Activated B cell treated with CpG ODN at 0.5 μM for 24 hours (primary cell): ENCODE measurements at regions of chr10 and their contacts with region 1.

Region 1: DNA sequence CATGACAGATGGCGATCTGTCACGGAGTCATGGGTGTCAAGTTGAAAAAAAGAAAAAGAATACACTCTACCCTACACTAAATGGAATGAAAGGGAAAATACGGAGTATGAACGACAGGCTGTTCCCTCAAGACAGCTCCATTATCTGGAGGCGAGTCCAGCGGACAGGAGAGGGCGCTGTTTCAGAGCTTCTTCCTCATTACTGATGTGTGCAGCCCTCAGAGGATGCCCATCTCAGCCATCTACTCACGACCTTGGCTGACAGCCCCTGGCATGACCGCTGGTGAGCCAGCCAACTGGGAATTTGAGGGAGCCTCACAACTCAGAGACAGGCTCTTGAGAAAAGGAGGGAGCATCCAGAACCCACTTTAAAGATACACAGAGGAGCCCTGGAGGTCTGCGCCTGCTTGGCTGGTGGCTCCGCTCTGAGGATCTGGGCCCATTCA is 49.6 kb upstream of the SMNDC1 start:
- DNase-seq: peak; percentile 60
- ATAC-seq: peak; percentile 5
- H3K4me3 Mint-ChIP-seq: peak overlapping the region; percentile 33
- H3K27ac Mint-ChIP-seq: peak overlapping the region; percentile 99
- H3K4me1 Mint-ChIP-seq: peaks cover 72% of the 10 kb centered on the region
- H3K27me3 Mint-ChIP-seq: no peaks in the 10 kb centered on the region
- CTCF ChIP-seq: no peak

Region 2: GRCh38 chr10:110304780-110305421 is 49.4 kb before region 1 on chr10 and contains the start of gene SMNDC1:
- CTCF ChIA-PET with region 1: interaction called, 29 read pairs
- POLR2A ChIA-PET with region 1: interaction called, 43 read pairs
- intact Hi-C with region 1: loop called (anchors 1 kb)
- DNase-seq: peak; percentile 93
- ATAC-seq: peak; percentile 92
- H3K4me3 Mint-ChIP-seq: peak within 1 kb of the TSS; percentile 95
- H3K27ac Mint-ChIP-seq: peak within 1 kb of the TSS; percentile 99
- H3K4me1 Mint-ChIP-seq: peaks cover 54% of the 10 kb centered on the region
- H3K27me3 Mint-ChIP-seq: no peaks in the 10 kb centered on the region
- CTCF ChIP-seq: no peak
- total RNA-seq, gene SMNDC1: 32.7 and 35.6 TPM in 2 replicates

Region 3: DNA sequence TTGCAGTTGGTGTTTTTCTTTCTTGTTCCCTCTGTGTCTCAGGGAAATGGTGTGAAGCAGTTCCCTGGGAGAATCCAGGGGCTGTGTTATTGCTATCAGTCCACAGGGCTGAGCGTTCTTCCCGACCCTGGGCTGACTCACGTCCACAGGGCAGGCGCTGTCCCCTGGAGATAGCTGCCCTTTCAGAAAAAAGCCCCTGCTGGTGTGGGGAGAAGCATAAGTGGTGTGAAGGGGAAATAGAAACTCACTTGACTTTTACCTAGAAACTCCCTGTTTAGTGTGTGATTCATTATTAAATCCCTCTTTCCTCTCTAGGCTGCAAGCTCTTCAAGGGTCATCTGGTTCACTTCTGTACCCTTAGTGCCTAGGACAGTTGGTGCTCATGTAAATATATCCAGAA is 13.7 kb after region 1 on chr10:
- CTCF ChIA-PET with region 1: interaction called, 18 read pairs
- POLR2A ChIA-PET with region 1: interaction called, 89 read pairs
- intact Hi-C with region 1: no loop called
- DNase-seq: no peak
- ATAC-seq: peak; percentile 71
- H3K4me3 Mint-ChIP-seq: peak overlapping the region; percentile 50
- H3K27ac Mint-ChIP-seq: peak overlapping the region; percentile 77
- H3K4me1 Mint-ChIP-seq: peaks cover 42% of the 10 kb centered on the region
- H3K27me3 Mint-ChIP-seq: no peaks in the 10 kb centered on the region
- CTCF ChIP-seq: no peak

Region 4: GRCh38 chr10:110420401-110421193 is 66.3 kb after region 1 on chr10:
- CTCF ChIA-PET with region 1: interaction called, 6 read pairs
- POLR2A ChIA-PET with region 1: interaction called, 328 read pairs
- intact Hi-C with region 1: no loop called
- DNase-seq: no peak
- ATAC-seq: no peak
- H3K4me3 Mint-ChIP-seq: no peak overlapping the region
- H3K27ac Mint-ChIP-seq: no peak overlapping the region
- H3K4me1 Mint-ChIP-seq: peaks cover 49% of the 10 kb centered on the region
- H3K27me3 Mint-ChIP-seq: peaks cover 11% of the 10 kb centered on the region
- CTCF ChIP-seq: no peak

Region 5: DNA sequence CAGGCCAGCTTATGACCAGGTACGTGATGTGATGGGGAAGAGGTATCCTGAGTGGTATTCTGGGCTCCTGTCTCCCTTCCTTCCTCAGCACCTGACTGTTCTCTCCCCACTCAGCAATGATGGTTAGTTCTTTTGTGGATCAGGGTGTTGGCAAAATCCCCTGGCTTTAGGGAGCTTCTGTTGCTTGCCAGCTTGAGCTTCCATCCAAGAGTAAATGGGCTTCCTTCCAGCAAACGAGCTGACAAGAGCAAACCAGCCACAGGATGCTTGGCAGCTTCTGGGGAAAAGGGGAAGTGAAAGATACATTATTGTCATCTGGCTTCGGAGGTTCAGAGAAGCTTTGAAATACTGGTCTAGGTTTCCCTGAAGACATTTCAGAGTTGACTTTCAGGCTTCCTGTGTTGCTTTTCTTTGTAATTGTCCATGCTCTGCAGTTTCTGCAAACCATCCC is 148.5 kb after region 1 on chr10:
- CTCF ChIA-PET with region 1: interaction called, 39 read pairs
- POLR2A ChIA-PET with region 1: interaction called, 231 read pairs
- intact Hi-C with region 1: loop called (anchors 1 kb)
- DNase-seq: no peak
- ATAC-seq: peak; percentile 53
- H3K4me3 Mint-ChIP-seq: peak overlapping the region; percentile 72
- H3K27ac Mint-ChIP-seq: peak overlapping the region; percentile 90
- H3K4me1 Mint-ChIP-seq: peaks cover 76% of the 10 kb centered on the region
- H3K27me3 Mint-ChIP-seq: no peaks in the 10 kb centered on the region
- CTCF ChIP-seq: no peak

Region 6: DNA sequence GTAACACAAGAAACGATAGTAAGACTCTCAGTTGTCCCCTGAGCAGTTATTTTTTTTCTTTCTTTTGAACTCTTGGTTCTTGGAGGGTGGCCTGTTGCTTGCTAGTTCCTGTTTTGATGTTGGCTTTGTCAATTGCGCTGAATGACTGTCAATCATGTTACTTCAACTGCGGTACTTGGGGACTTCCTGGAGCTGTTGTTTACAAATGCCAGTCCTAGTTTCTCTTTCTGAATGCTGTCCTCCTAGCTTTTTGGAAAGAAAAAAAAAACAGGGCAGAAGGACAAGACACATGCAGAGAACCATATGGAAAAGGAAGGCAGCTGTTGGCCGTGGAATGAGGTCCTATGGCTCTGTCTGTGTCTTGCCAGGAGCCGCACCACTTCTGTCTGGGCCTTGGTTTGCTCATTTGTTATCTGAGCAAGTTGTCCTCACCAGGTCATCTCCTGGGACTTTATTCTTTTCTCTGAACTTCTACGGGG is 510.4 kb after region 1 on chr10:
- CTCF ChIA-PET with region 1: no interaction called
- POLR2A ChIA-PET with region 1: no interaction called
- intact Hi-C with region 1: loop called (anchors 2 kb)
- DNase-seq: no peak
- ATAC-seq: peak; percentile 50
- H3K4me3 Mint-ChIP-seq: peak overlapping the region; percentile 79
- H3K27ac Mint-ChIP-seq: peak overlapping the region; percentile 97
- H3K4me1 Mint-ChIP-seq: peaks cover 98% of the 10 kb centered on the region
- H3K27me3 Mint-ChIP-seq: no peaks in the 10 kb centered on the region
- CTCF ChIP-seq: no peak